ENCODE measurements at regions of chr7 and their contacts with region 1.

Region 1: DNA sequence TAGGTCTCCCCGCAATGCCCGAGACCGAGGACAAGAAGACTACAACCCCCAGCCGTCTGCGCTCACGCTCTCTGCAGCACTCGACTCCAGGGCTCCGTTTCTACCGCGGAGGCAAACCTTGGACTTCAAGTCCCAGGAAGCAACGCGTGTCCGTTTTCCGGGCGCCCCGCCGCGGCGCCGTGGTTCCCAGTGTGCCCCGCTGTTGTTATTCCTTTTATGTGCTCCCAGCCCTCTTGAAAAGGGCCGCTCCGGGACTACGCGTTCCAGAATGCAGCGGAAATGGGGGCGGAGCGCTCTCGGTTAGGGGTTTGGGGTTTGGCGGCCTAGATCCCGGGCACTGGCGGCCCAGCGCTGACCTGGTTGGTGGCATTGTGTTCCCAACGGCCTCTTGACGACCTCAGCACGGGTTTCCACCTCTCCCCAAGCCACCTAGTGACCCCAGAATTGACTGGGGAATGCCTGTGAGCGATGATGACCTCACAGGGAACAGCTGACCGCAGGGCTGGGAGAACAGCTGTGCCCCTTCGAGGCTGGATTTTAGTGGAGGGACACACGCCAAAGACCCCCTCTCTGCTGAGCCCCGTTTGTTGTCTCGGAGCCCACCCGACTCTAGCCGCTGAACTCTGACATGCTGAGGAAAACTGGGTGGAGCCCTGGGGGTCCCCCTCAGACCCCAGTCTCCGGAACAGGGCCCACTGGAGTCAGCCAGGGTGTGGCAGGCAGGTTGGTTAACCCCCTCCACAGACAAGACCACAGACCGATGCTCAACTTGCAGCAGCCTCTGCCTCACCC is 488 bp upstream of the CDK5 start:
- DNase-seq: peak; percentile 98 to 100 (median 100)
- H3K4me3 ChIP-seq: peak overlapping the region; percentile 45 to 95 (median 81)
- H3K27ac ChIP-seq: peak overlapping the region; percentile 92 to 100 (median 100)
- H3K27me3 ChIP-seq: peaks cover 0 to 7% (median 0%) of the 10 kb centered on the region in 45 donors
- CTCF ChIP-seq: peak in 38 of 56 donors; percentile 8 to 59 (median 33)

Region 2: DNA sequence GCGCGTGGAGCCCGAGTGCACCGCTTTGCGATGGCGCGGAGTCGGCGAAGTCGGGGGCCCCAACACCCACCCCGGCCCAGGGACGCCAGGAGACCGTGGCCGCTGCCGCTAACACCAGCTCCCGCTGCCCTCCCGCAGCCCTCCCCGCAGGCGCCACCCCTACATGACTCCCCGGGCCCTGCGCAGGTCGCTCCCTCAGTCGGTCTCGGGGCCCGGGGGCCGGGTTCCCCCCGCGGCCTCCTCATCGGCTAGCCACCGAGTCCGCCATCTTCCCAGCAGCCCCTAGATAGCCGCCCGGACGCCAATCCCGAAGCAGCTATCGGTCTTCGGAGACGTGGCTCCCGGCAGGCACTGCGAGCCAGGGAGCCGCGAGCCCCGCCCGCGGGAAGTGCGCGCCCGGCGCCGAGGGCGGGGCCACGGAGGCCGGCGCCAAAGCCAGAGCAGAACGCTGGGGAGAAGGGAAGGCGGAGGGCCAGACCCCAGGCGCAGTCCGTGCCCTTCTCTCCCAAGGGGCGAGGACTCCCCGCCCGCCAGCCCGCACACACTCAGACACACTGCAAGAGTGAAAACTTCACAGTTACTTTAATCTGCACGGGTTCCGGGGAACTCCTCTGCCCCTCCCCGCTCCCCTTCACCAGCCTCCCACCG is 22.5 kb after region 1 on chr7 and contains the start of gene FASTK:
- intact Hi-C with region 1: loop called (anchors 1 kb)
- DNase-seq: peak; percentile 87 to 96 (median 94)
- H3K4me3 ChIP-seq: peak within 1 kb of the TSS; percentile 57 to 99 (median 92)
- H3K27ac ChIP-seq: peak within 1 kb of the TSS; percentile 82 to 98 (median 96)
- H3K27me3 ChIP-seq: no peaks in the 10 kb centered on the region
- CTCF ChIP-seq: peak in 27 of 56 donors; percentile 8 to 55 (median 26)
- total RNA-seq, gene FASTK: 53.2 to 105 (median 70.3) TPM

Region 3: GRCh38 chr7:151351027-151351426 is 292.8 kb after region 1 on chr7:
- intact Hi-C with region 1: no loop called
- DNase-seq: no peak
- H3K4me3 ChIP-seq: no peak overlapping the region
- H3K27ac ChIP-seq: no peak overlapping the region
- H3K27me3 ChIP-seq: no peaks in the 10 kb centered on the region
- CTCF ChIP-seq: peak in 1 of 56 donors; percentile 6

Measured in dorsolateral prefrontal cortex (tissue), 120 donors.